HEK293 (cell line): ENCODE measurements at regions of chr20 and their contacts with region 1.

Region 1: GRCh38 chr20:51791634-51792033 is 10.7 kb downstream of the SALL4 start:
- H3K4me3 ChIP-seq: no peak overlapping the region
- H3K27ac ChIP-seq: no peak overlapping the region
- H3K4me1 ChIP-seq: peaks cover 4% of the 10 kb centered on the region
- CTCF ChIP-seq: no peak

Region 2: GRCh38 chr20:51305316-51306052 is 486.1 kb before region 1 on chr20:
- CTCF ChIA-PET with region 1: no interaction called
- POLR2A ChIA-PET with region 1: no interaction called
- H3K4me3 ChIP-seq: no peak overlapping the region
- H3K27ac ChIP-seq: no peak overlapping the region
- H3K4me1 ChIP-seq: no peaks in the 10 kb centered on the region
- CTCF ChIP-seq: no peak

Region 3: GRCh38 chr20:51595058-51595532 is 196.5 kb before region 1 on chr20:
- CTCF ChIA-PET with region 1: no interaction called
- POLR2A ChIA-PET with region 1: no interaction called
- H3K4me3 ChIP-seq: no peak overlapping the region
- H3K27ac ChIP-seq: no peak overlapping the region
- H3K4me1 ChIP-seq: no peaks in the 10 kb centered on the region
- CTCF ChIP-seq: peak; percentile 75

Region 4: DNA sequence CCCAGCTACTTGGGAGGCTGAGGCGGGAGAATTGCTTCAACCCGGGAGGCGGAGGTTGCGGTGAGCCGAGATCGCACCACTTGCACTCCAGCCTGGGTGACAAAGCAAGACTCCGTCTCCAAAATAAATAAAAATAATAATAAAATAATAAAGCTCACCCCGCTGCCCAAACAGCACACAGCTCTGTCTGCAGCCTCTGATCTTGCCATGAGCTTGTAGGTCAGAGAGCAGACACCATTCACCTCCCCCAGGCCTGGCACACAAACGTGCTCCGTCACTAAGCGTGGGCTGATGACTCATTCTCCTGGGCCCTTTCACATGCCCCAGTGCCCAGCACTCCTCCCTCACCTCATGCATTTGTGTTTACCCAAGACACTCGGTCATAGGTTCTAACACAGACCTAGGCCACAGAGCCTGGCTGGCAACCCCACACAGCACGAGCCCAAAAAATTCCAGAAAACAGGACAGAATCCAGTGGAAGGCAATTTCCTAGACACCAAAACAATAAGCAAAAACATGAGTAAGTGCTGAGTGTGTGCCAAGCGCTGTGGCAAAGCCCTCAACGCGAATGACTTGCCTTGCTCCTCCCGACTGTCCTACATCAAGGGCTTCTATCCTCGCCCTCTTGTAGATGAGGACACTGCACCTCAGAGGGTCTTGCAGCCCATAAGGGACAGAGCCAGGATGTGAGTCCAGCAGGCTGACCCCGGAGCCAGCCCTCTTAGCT is 41.4 kb before region 1 on chr20:
- CTCF ChIA-PET with region 1: no interaction called
- POLR2A ChIA-PET with region 1: no interaction called
- H3K4me3 ChIP-seq: no peak overlapping the region
- H3K27ac ChIP-seq: no peak overlapping the region; the same call in 1 of the 2 replicates
- H3K4me1 ChIP-seq: peaks cover 7% of the 10 kb centered on the region
- CTCF ChIP-seq: no peak

Region 5: GRCh38 chr20:51910321-51911053 is 118.9 kb after region 1 on chr20:
- CTCF ChIA-PET with region 1: no interaction called
- POLR2A ChIA-PET with region 1: interaction called, 10 read pairs
- H3K4me3 ChIP-seq: no peak overlapping the region
- H3K27ac ChIP-seq: no peak overlapping the region
- H3K4me1 ChIP-seq: peaks cover 10% of the 10 kb centered on the region
- CTCF ChIP-seq: no peak